PC-3 (cell line): ENCODE measurements at regions of chr16 and their contacts with region 1.

Region 1: GRCh38 chr16:3880623-3881498 is at the start of gene CREBBP:
- DNase-seq: peak; percentile 83
- ATAC-seq: peak; percentile 87
- H3K4me3 ChIP-seq: peak within 1 kb of the TSS; percentile 91
- H3K27ac ChIP-seq: no peak within 1 kb of the TSS
- H3K4me1 ChIP-seq: peaks cover 17% of the 10 kb centered on the region
- H3K27me3 ChIP-seq: no peaks in the 10 kb centered on the region
- CTCF ChIP-seq: no peak
- total RNA-seq, gene CREBBP: 21.9 and 23.6 TPM in 2 replicates

Region 2: DNA sequence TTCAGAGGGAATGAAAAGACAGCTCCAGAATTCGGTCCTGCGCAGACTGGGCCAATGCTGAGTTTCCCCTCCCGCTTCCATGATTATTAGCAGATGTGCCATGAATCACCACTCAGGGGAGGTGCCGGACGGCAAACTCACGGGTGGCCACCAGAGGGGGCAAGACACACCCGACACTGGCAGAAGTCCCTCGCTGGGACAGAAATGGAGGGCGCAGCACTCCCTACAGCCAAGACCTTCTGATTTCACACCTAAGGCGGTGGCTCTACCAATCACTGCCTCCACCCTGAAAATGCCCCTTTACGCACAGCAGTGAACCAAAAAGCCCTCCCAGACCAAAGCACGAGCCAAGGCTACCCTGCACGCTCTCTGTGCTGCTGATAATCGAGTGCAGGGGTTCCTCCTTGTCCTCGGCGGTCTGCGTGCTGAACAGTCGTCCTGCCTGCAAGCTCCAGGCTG is 190.4 kb before region 1 on chr16:
- CTCF ChIA-PET with region 1: no interaction called
- POLR2A ChIA-PET with region 1: no interaction called
- intact Hi-C with region 1: loop called (anchors 1 kb)
- DNase-seq: peak; percentile 83
- ATAC-seq: peak; percentile 97
- H3K4me3 ChIP-seq: no peak overlapping the region
- H3K27ac ChIP-seq: no peak overlapping the region
- H3K4me1 ChIP-seq: no peaks in the 10 kb centered on the region
- H3K27me3 ChIP-seq: no peaks in the 10 kb centered on the region
- CTCF ChIP-seq: peak; percentile 84

Region 3: GRCh38 chr16:3838600-3839401 is 42.1 kb before region 1 on chr16:
- CTCF ChIA-PET with region 1: no interaction called
- POLR2A ChIA-PET with region 1: no interaction called
- intact Hi-C with region 1: loop called (anchors 5 kb)
- DNase-seq: no peak
- ATAC-seq: no peak
- H3K4me3 ChIP-seq: no peak overlapping the region
- H3K27ac ChIP-seq: no peak overlapping the region
- H3K4me1 ChIP-seq: 0 out of 2 replicates have a peak, but pooled peaks cover 5% of the 10 kb centered on the region
- H3K27me3 ChIP-seq: no peaks in the 10 kb centered on the region
- CTCF ChIP-seq: no peak

Region 4: GRCh38 chr16:3849751-3850543 is 30.9 kb before region 1 on chr16:
- CTCF ChIA-PET with region 1: no interaction called
- POLR2A ChIA-PET with region 1: no interaction called
- intact Hi-C with region 1: no loop called
- DNase-seq: no peak
- ATAC-seq: no peak
- H3K4me3 ChIP-seq: no peak overlapping the region
- H3K27ac ChIP-seq: no peak overlapping the region
- H3K4me1 ChIP-seq: no peaks in the 10 kb centered on the region
- H3K27me3 ChIP-seq: no peaks in the 10 kb centered on the region
- CTCF ChIP-seq: no peak

Region 5: DNA sequence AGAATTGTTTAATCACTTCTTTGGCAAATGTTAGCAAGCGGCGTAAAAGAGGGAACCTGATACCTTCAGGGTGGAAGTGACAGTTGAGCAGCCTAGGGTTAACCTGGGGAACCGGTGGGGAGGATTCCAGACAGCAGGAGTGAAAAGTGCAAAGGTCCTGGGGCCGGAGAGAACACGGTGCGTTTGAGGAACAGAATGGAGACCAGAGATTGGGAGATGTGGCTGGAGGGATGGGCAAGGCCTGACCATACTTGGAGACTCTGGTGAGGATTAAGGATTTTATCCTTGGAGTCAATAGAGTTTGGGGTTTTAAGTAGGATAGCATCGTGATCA is 888.4 kb after region 1 on chr16:
- CTCF ChIA-PET with region 1: no interaction called
- POLR2A ChIA-PET with region 1: no interaction called
- intact Hi-C with region 1: no loop called
- DNase-seq: no peak
- ATAC-seq: no peak
- H3K4me3 ChIP-seq: peak overlapping the region; percentile 64
- H3K27ac ChIP-seq: no peak overlapping the region
- H3K4me1 ChIP-seq: peaks cover 15% of the 10 kb centered on the region
- H3K27me3 ChIP-seq: no peaks in the 10 kb centered on the region
- CTCF ChIP-seq: no peak